Aorta (tissue), 5 donors: ENCODE measurements at regions of chr9 and their contacts with region 1.

Region 1: GRCh38 chr9:91422758-91423711 is 597 bp downstream of the NFIL3 start:
- DNase-seq: peak; percentile 73 to 85
- ATAC-seq: peak; percentile 24
- H3K4me3 ChIP-seq: peak overlapping the region; percentile 90 to 99
- H3K27ac ChIP-seq: peak overlapping the region; percentile 97 to 98
- H3K4me1 ChIP-seq: peaks cover 4 to 5% of the 10 kb centered on the region in 2 donors
- H3K27me3 ChIP-seq: no peaks in the 10 kb centered on the region

Region 2: GRCh38 chr9:90964101-90965020 is 458.7 kb before region 1 on chr9:
- intact Hi-C with region 1: loop called in 1 of 2 experiments (anchors 5 kb)
- DNase-seq: peak; percentile 65 to 83
- ATAC-seq: peak; percentile 77
- H3K4me3 ChIP-seq: peak overlapping the region; percentile 4 to 25
- H3K27ac ChIP-seq: peak overlapping the region; percentile 91 to 93
- H3K4me1 ChIP-seq: peaks cover 3 to 8% of the 10 kb centered on the region in 2 donors
- H3K27me3 ChIP-seq: no peaks in the 10 kb centered on the region

Region 3: DNA sequence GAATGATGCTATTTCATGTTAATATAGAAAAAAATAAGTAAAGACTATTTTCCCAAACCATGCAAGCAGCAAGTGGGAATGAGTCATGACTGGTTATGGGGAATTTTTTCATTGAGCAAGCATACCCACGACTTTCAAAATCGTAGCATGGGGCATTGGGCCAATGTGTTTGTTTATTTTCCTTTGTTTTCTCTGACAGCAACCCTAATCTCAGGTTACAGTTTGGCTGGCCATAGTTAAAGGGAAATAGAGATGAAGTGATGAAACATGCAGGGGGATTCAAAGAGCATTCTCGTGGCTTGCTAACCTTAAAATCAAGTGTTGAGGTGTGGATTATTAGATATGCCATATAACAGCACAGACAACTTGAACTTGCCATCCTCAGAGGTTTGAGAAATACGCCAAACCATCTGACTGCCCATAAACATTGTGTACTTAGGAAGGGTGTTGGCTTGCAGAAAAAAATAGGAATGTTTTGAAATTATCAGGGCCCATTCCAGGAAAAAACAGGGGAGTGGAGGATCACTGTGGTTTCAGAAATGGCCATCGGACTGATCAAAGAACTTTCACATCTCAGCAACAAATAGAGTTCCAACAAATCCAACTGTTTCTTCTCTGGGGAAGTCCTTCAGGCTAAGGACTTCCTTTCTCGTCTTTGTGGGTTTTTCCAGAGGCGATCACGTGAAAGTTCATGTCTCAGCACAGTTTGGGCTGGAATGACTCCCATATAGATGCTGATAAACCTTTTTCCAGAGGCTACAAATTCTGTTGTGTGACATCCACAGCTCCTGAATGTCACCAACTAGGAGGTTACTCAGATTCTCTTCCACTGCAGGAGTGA is 362.3 kb before region 1 on chr9:
- intact Hi-C with region 1: no loop called
- DNase-seq: no peak
- ATAC-seq: peak; percentile 59
- H3K4me3 ChIP-seq: no peak overlapping the region
- H3K27ac ChIP-seq: no peak overlapping the region
- H3K4me1 ChIP-seq: no peaks in the 10 kb centered on the region
- H3K27me3 ChIP-seq: no peaks in the 10 kb centered on the region

Region 4: GRCh38 chr9:91101611-91102168 is 321.3 kb before region 1 on chr9:
- intact Hi-C with region 1: loop called in 1 of 2 experiments (anchors 5 kb)
- DNase-seq: no peak
- ATAC-seq: no peak
- H3K4me3 ChIP-seq: no peak overlapping the region
- H3K27ac ChIP-seq: peak overlapping the region in 1 of 2 donors; percentile 91
- H3K4me1 ChIP-seq: peaks cover 0 to 6% of the 10 kb centered on the region in 2 donors
- H3K27me3 ChIP-seq: no peaks in the 10 kb centered on the region

Region 5: DNA sequence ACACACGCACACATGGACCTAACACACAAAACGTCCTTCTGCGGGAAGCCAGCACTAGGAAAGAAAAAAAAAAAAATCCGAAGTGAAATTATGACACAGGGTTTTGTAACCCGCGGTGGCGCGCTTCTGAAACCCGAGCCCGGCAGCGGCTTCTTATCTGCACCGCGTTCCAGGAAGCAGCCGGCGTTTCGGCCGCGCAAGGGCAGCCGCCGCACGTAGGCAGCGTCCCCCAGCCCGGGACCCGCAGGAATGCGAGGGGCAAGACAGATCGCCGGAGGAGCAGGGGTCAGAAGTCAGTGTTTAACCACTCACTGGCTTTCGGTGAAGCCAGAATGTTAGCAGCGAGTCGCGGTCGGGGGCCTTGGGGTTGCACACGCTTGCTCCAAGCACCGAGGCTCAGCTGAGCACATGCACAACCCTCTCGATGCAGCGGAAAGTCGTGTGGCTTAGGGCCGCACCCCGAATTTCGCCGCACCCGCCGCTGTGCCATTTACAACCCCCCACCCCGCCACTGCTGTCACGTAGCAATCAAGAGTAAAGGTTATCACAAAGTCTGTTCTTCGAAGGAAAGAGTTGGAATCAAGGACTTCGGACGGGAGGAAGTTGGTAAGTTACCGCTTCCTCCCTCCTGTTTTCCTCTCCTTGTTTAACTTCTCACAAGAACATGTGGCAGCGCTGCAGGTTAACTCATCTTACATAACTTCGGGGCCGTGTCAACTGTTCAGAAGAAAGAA is 229.2 kb before region 1 on chr9:
- intact Hi-C with region 1: loop called (anchors 2 to 5 kb)
- DNase-seq: peak; percentile 94 to 95
- ATAC-seq: peak; percentile 83
- H3K4me3 ChIP-seq: no peak overlapping the region
- H3K27ac ChIP-seq: peak overlapping the region; percentile 92 to 99
- H3K4me1 ChIP-seq: no peaks in the 10 kb centered on the region
- H3K27me3 ChIP-seq: no peaks in the 10 kb centered on the region

Region 6: GRCh38 chr9:91361291-91362050 is 61.6 kb before region 1 on chr9 and contains the start of gene AUH:
- intact Hi-C with region 1: loop called (anchors 5 kb)
- DNase-seq: peak; percentile 90 to 96
- ATAC-seq: peak; percentile 97
- H3K4me3 ChIP-seq: peak within 1 kb of the TSS; percentile 85 to 96
- H3K27ac ChIP-seq: peak within 1 kb of the TSS in 1 of 2 donors; percentile 58
- H3K4me1 ChIP-seq: peaks cover 0 to 2% of the 10 kb centered on the region in 2 donors
- H3K27me3 ChIP-seq: no peaks in the 10 kb centered on the region
- total RNA-seq, gene AUH: 13.7 to 25.7 TPM

Region 7: GRCh38 chr9:91972076-91972626 is 549.1 kb after region 1 on chr9:
- intact Hi-C with region 1: no loop called
- DNase-seq: no peak
- ATAC-seq: no peak
- H3K4me3 ChIP-seq: no peak overlapping the region
- H3K27ac ChIP-seq: no peak overlapping the region
- H3K4me1 ChIP-seq: no peaks in the 10 kb centered on the region
- H3K27me3 ChIP-seq: no peaks in the 10 kb centered on the region